ENCODE measurements at regions of chr3 and their contacts with region 1.

Region 1: GRCh38 chr3:113019182-113020137 is 28.7 kb downstream of the GTPBP8 start:
- DNase-seq: peak; percentile 77
- H3K4me3 Mint-ChIP-seq: peak overlapping the region; percentile 91
- H3K27ac Mint-ChIP-seq: peak overlapping the region; percentile 89
- H3K4me1 Mint-ChIP-seq: peaks cover 58% of the 10 kb centered on the region
- H3K27me3 Mint-ChIP-seq: no peaks in the 10 kb centered on the region

Region 2: DNA sequence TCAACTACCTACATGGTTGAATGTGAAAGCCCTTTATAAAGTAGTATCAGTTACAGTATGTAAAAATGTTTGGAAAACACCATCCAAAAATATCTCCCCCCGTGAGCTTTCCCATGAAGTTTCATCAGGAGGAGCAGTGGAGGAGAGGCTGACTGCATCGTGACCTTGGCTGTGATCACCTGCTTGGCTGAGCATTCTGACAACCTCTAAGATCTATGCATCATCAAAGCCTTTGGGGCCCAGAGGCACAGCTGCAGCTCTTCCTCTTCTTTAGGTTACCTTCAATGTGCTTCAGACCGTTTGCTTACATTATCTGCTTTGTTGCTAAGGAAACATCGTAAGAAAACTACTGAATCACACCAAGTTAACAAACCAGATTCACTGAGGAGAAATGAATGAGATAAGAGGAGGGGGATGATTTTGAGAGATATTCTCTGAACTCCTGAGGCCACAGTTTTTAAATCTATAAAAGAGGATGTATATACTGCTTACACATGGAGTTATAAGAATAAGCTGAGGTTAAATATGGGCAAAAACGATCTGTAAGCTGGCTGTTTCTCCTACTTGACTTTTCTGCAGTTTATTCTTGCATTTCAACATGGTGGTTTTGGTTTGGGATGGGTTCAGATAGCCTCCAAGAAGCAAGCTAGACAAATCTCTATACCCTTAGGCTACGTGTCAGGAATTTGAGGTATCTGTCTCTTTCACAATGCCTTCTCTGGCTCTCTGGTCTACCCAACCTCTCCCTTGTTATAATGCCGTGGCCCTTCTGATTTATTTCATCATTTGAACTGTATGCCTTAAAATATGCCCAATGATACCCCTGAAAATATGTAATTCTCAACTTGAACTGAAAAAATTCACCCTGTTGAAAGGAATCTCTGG is 890.4 kb before region 1 on chr3:
- intact Hi-C with region 1: loop called (anchors 5 kb)
- DNase-seq: peak; percentile 55
- H3K4me3 Mint-ChIP-seq: peak overlapping the region; percentile 38
- H3K27ac Mint-ChIP-seq: peak overlapping the region; percentile 93
- H3K4me1 Mint-ChIP-seq: peaks cover 82% of the 10 kb centered on the region
- H3K27me3 Mint-ChIP-seq: no peaks in the 10 kb centered on the region

Region 3: GRCh38 chr3:112990672-112991602 is 28.5 kb before region 1 on chr3 and contains the start of gene GTPBP8:
- intact Hi-C with region 1: loop called (anchors 1 kb)
- DNase-seq: peak; percentile 81
- H3K4me3 Mint-ChIP-seq: peak within 1 kb of the TSS; percentile 90
- H3K27ac Mint-ChIP-seq: peak within 1 kb of the TSS; percentile 93
- H3K4me1 Mint-ChIP-seq: peaks cover 79% of the 10 kb centered on the region
- H3K27me3 Mint-ChIP-seq: no peaks in the 10 kb centered on the region
- total RNA-seq, gene GTPBP8: 22.6 and 25.0 TPM in 2 replicates

Region 4: GRCh38 chr3:113005611-113006010 is 13.8 kb before region 1 on chr3:
- intact Hi-C with region 1: loop called (anchors 1 kb)
- DNase-seq: peak; percentile 24
- H3K4me3 Mint-ChIP-seq: peak overlapping the region; percentile 67
- H3K27ac Mint-ChIP-seq: peak overlapping the region; percentile 91
- H3K4me1 Mint-ChIP-seq: peaks cover 83% of the 10 kb centered on the region
- H3K27me3 Mint-ChIP-seq: no peaks in the 10 kb centered on the region

Region 5: GRCh38 chr3:113035387-113035982 is 16.0 kb after region 1 on chr3:
- intact Hi-C with region 1: loop called (anchors 1 kb)
- DNase-seq: peak; percentile 15
- H3K4me3 Mint-ChIP-seq: no peak overlapping the region
- H3K27ac Mint-ChIP-seq: no peak overlapping the region
- H3K4me1 Mint-ChIP-seq: no peaks in the 10 kb centered on the region
- H3K27me3 Mint-ChIP-seq: no peaks in the 10 kb centered on the region

Region 6: GRCh38 chr3:113264283-113265131 is 245.0 kb after region 1 on chr3:
- intact Hi-C with region 1: no loop called
- DNase-seq: no peak
- H3K4me3 Mint-ChIP-seq: no peak overlapping the region
- H3K27ac Mint-ChIP-seq: no peak overlapping the region
- H3K4me1 Mint-ChIP-seq: no peaks in the 10 kb centered on the region
- H3K27me3 Mint-ChIP-seq: peaks cover 6% of the 10 kb centered on the region

Region 7: GRCh38 chr3:113531826-113532697 is 512.6 kb after region 1 on chr3 and contains the start of gene SIDT1:
- intact Hi-C with region 1: loop called (anchors 1 kb)
- DNase-seq: peak; percentile 64
- H3K4me3 Mint-ChIP-seq: peak within 1 kb of the TSS; percentile 100
- H3K27ac Mint-ChIP-seq: peak within 1 kb of the TSS; percentile 99
- H3K4me1 Mint-ChIP-seq: peaks cover 55% of the 10 kb centered on the region
- H3K27me3 Mint-ChIP-seq: peaks cover 10% of the 10 kb centered on the region
- total RNA-seq, gene SIDT1: 11.3 and 12.2 TPM in 2 replicates